Heart left ventricle (tissue), 16 donors: ENCODE measurements at regions of chr10 and their contacts with region 1.

Region 1: GRCh38 chr10:59830601-59831259 is 75.6 kb downstream of the CCDC6 start:
- DNase-seq: peak in 4 of 5 donors; percentile 26 to 40 (median 34)
- ATAC-seq: peak in 3 of 4 donors; percentile 56 to 73 (median 57)
- H3K4me3 ChIP-seq: no peak overlapping the region
- H3K27ac ChIP-seq: no peak overlapping the region
- H3K4me1 ChIP-seq: peaks cover 0 to 41% (median 9%) of the 10 kb centered on the region in 12 donors
- H3K27me3 ChIP-seq: no peaks in the 10 kb centered on the region
- CTCF ChIP-seq: peak; percentile 64 to 87 (median 78)
- POLR2A ChIP-seq: no peak

Region 2: DNA sequence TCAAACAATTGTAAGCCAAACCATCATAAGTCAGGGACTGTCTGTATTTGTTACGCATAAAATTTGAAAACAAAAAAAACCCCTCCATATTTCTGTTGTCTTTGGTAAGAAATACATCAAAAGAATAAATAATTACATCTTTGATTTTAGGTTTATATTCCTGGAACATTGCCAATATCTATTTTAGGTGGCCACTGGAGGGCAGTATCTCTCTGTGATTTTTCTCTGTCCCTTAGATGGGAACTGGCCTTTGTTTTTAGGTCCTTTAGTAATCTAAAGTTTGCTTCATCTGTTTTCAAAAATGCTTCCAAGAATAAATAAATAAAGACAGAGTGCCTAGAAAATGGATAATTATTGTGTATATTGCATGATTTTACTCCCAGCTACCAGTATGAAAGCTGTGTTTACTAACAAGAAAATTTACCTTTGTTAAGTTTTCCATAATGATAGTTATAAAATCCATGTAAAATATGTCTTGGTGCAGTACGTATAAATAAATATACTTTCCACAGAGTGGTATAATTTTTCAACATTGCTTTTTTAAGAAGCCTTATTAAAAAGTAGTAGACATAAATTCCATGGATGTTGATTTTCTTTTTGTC is 590.0 kb before region 1 on chr10:
- intact Hi-C with region 1: loop called in 3 of 10 experiments (anchors 5 to 10 kb)
- DNase-seq: peak in 1 of 5 donors; percentile 9
- ATAC-seq: no peak
- H3K4me3 ChIP-seq: no peak overlapping the region
- H3K27ac ChIP-seq: no peak overlapping the region
- H3K4me1 ChIP-seq: peaks cover 0 to 4% (median 0%) of the 10 kb centered on the region in 12 donors
- H3K27me3 ChIP-seq: no peaks in the 10 kb centered on the region
- CTCF ChIP-seq: peak; percentile 45 to 85 (median 66)
- POLR2A ChIP-seq: no peak

Region 3: GRCh38 chr10:59290448-59290847 is 540.3 kb before region 1 on chr10:
- intact Hi-C with region 1: no loop called
- DNase-seq: no peak
- ATAC-seq: no peak
- H3K4me3 ChIP-seq: no peak overlapping the region
- H3K27ac ChIP-seq: no peak overlapping the region
- H3K4me1 ChIP-seq: peaks cover 0 to 18% (median 0%) of the 10 kb centered on the region in 12 donors
- H3K27me3 ChIP-seq: no peaks in the 10 kb centered on the region
- CTCF ChIP-seq: no peak
- POLR2A ChIP-seq: no peak

Region 4: DNA sequence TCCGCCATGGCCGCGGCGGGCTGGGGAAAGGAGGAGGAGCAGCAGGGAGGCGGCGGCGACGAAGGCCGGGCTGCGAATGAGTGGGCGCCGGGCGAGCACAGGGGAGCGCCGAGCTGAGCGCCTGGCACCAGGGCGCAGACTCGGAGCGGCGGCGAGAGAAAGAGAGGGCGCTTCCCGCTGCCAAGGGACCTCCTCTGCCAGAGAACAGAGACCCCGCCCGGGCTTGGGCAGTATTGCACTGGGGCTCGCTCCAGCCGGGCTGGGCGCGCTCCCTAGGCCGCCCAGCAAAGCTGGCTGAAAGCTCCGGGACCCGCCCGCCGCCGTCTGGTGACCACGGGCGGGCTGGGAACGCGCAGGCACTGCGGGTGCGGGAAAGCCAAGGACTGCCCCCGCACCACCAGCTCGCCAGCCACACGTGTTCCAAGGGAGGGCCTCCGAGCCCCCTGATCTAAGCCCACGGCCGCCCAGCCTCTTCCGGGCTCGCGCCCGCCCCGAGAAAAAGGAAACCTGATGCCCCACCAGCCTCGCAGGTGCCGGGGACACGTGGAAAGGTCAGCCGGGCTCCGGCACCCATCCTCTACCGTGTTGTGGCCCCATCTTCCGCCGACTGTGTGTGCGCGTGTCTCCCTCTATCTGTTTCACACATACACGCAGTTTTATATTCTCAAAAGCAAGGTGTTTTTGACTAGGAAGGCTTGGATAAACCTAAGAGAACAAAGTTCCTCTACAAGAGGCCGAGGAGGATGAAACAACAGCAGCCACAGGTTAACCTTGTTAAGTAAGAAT is 75.9 kb after region 1 on chr10 and contains the start of gene CCDC6:
- intact Hi-C with region 1: loop called in 3 of 10 experiments (anchors 5 kb)
- DNase-seq: peak; percentile 93 to 96 (median 96)
- ATAC-seq: peak; percentile 90 to 96 (median 96)
- H3K4me3 ChIP-seq: peak within 1 kb of the TSS; percentile 76 to 98 (median 92)
- H3K27ac ChIP-seq: peak within 1 kb of the TSS; percentile 83 to 96 (median 91)
- H3K4me1 ChIP-seq: peaks cover 0 to 52% (median 29%) of the 10 kb centered on the region in 12 donors
- H3K27me3 ChIP-seq: no peaks in the 10 kb centered on the region
- CTCF ChIP-seq: peak; percentile 68 to 87 (median 80)
- POLR2A ChIP-seq: peak in 1 of 2 donors; percentile 88
- total RNA-seq, gene CCDC6: 13.8 to 47.1 (median 20.2) TPM